ENCODE measurements at regions of chr16 and their contacts with region 1.

Region 1: GRCh38 chr16:78122774-78123315 is 23.4 kb downstream of the WWOX start:
- DNase-seq: peak; percentile 75
- ATAC-seq: peak; percentile 86
- H3K4me3 ChIP-seq: peak overlapping the region in 1 of 3 experiments; percentile 25; a peak in 2 of 6 replicates
- H3K27ac ChIP-seq: peak overlapping the region; percentile 33
- H3K4me1 ChIP-seq: peaks cover 37% of the 10 kb centered on the region
- H3K27me3 ChIP-seq: no peaks in the 10 kb centered on the region
- CTCF ChIP-seq: peak; percentile 61
- EP300 ChIP-seq: no peak
- POLR2A ChIP-seq: no peak
- RAD21 ChIP-seq: peak; percentile 70

Region 2: GRCh38 chr16:78184238-78185183 is 61.7 kb after region 1 on chr16:
- CTCF ChIA-PET with region 1: no interaction called
- POLR2A ChIA-PET with region 1: no interaction called
- in situ Hi-C with region 1: no loop called
- intact Hi-C with region 1: loop called (anchors 10 kb)
- DNase-seq: peak; percentile 68
- ATAC-seq: peak; percentile 67
- H3K4me3 ChIP-seq: no peak overlapping the region
- H3K27ac ChIP-seq: no peak overlapping the region
- H3K4me1 ChIP-seq: peaks cover 34% of the 10 kb centered on the region
- H3K27me3 ChIP-seq: no peaks in the 10 kb centered on the region
- CTCF ChIP-seq: no peak
- EP300 ChIP-seq: peak in 1 of 2 experiments; percentile 26; a peak in 1 of 4 replicates
- POLR2A ChIP-seq: no peak
- RAD21 ChIP-seq: no peak

Region 3: DNA sequence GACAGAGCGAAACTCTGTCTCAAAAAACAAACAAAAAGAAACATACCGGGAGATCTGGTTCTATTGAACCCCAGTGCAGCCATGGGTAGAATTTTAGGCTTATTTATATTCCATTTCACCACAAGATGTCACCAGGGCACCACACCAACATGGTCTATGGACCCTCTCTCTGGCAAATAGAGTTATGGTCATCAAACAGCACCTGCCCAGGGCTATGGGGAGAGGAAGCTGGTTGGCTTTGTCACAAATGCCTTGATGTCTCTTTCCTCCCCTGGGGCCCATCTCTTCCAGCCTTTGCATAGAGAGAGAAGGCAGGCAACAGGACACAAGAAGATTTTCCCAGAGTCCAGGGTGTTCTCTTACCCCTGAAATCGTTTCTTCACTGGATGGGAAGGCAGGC is 105.0 kb after region 1 on chr16:
- CTCF ChIA-PET with region 1: interaction called, 3 read pairs
- POLR2A ChIA-PET with region 1: no interaction called
- in situ Hi-C with region 1: loop called (anchors 5 kb)
- intact Hi-C with region 1: loop called (anchors 2 kb)
- DNase-seq: peak; percentile 74
- ATAC-seq: peak; percentile 98
- H3K4me3 ChIP-seq: no peak overlapping the region
- H3K27ac ChIP-seq: no peak overlapping the region
- H3K4me1 ChIP-seq: peaks cover 30% of the 10 kb centered on the region
- H3K27me3 ChIP-seq: no peaks in the 10 kb centered on the region
- CTCF ChIP-seq: peak; percentile 87
- EP300 ChIP-seq: no peak
- POLR2A ChIP-seq: no peak
- RAD21 ChIP-seq: peak; percentile 86

Region 4: DNA sequence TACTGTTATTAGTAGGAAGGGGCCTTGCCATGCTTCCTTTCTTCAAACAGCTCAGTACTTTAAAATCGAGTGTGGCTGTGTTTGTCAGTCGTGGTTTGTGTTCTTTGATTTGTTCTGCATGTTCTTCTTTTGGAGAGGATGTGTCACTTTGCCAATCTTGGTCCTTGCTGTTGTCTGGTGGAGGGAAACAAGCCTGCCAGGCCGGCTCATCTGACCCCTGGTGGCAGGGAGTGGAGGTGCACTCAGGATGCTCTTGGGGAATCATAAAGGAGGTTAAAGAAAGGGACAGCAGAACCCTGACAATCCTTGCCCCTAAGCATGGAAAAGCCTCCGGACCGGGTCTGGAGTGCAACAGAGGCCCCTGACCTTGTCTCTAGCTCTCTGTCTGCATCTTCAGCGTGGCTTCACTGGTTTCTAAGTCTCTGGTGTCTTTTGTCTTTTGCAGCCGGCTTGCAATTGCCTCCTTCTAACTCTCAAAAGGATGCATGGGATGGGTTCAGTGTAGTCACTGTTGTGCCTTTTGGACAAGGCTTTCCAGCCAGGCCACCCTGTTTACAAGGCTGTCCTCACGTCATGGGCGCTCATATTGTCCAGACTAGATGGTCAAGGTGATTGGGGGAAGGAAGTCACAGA is 112.4 kb after region 1 on chr16:
- CTCF ChIA-PET with region 1: interaction called, 38 read pairs
- POLR2A ChIA-PET with region 1: no interaction called
- in situ Hi-C with region 1: loop called (anchors 5 kb)
- intact Hi-C with region 1: loop called (anchors 1 kb)
- DNase-seq: peak; percentile 65
- ATAC-seq: peak; percentile 96
- H3K4me3 ChIP-seq: no peak overlapping the region
- H3K27ac ChIP-seq: no peak overlapping the region
- H3K4me1 ChIP-seq: peaks cover 21% of the 10 kb centered on the region
- H3K27me3 ChIP-seq: no peaks in the 10 kb centered on the region
- CTCF ChIP-seq: peak; percentile 93
- EP300 ChIP-seq: no peak
- POLR2A ChIP-seq: no peak
- RAD21 ChIP-seq: peak; percentile 83

Region 5: DNA sequence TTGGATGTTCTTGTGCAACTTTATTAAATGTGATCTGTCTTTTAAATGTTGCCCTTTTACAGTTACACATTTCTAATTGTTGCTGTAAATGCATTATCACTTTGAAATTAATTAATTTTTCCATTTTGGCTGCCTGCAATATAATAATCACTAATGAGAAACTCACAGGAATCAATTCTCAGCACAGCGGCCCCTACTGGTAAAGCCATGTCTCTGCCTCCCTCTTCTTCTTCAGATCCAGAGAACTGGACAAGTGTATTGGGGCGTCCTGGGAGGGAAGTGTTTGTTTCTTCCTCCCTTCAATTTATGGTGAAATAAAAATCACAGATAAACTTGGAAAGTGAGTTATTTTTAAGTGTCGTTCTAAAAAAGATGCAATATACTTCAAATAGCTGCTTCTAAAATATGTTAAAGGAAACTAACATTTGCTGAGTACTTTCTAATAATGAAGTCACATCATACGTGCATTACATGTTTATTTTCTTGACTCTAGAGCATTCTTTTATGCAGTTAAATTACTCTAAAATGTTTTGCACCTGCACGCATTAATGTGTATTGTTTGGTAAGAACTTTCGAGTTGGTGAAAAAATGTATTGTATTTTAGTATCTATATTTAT is 314.6 kb after region 1 on chr16:
- CTCF ChIA-PET with region 1: interaction called, 3 read pairs
- POLR2A ChIA-PET with region 1: no interaction called
- in situ Hi-C with region 1: no loop called
- intact Hi-C with region 1: loop called (anchors 5 kb)
- DNase-seq: peak; percentile 38
- ATAC-seq: peak; percentile 47; the same call in 2 of the 3 replicates
- H3K4me3 ChIP-seq: no peak overlapping the region
- H3K27ac ChIP-seq: no peak overlapping the region
- H3K4me1 ChIP-seq: peaks cover 8% of the 10 kb centered on the region
- H3K27me3 ChIP-seq: no peaks in the 10 kb centered on the region
- CTCF ChIP-seq: peak; percentile 75
- EP300 ChIP-seq: no peak
- POLR2A ChIP-seq: no peak
- RAD21 ChIP-seq: peak; percentile 37; the same call in 1 of the 2 replicates

Region 6: GRCh38 chr16:78483124-78483992 is 360.5 kb after region 1 on chr16:
- CTCF ChIA-PET with region 1: no interaction called
- POLR2A ChIA-PET with region 1: no interaction called
- in situ Hi-C with region 1: loop called (anchors 10 kb)
- intact Hi-C with region 1: no loop called
- DNase-seq: peak; percentile 93
- ATAC-seq: peak; percentile 72
- H3K4me3 ChIP-seq: no peak overlapping the region
- H3K27ac ChIP-seq: peak overlapping the region; percentile 90
- H3K4me1 ChIP-seq: peaks cover 89% of the 10 kb centered on the region
- H3K27me3 ChIP-seq: no peaks in the 10 kb centered on the region
- CTCF ChIP-seq: no peak
- EP300 ChIP-seq: peak; percentile 37 to 92; a peak in 3 of 4 replicates
- POLR2A ChIP-seq: no peak
- RAD21 ChIP-seq: no peak

Region 7: DNA sequence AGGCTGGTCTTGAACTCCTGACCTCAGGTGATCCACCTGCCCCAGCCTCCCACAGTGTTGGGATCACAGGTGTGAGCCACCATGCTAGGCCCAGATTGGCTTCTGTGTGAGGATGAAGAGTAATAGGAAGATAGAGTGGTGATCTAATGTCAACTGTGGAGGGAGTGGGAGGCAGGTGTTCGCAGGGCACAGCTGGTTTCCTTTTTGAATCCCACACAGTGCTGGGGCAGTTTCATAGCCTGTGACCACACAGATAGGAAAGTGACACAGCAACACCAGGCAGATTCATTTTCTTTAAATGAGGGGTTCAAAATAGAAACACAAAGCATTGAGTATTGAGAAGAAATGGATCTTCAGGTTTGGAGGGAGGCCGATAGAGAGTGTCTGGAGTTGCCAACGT is 516.9 kb after region 1 on chr16:
- CTCF ChIA-PET with region 1: no interaction called
- POLR2A ChIA-PET with region 1: no interaction called
- in situ Hi-C with region 1: no loop called
- intact Hi-C with region 1: no loop called
- DNase-seq: no peak
- ATAC-seq: no peak
- H3K4me3 ChIP-seq: no peak overlapping the region
- H3K27ac ChIP-seq: no peak overlapping the region
- H3K4me1 ChIP-seq: 0 out of 2 replicates have a peak, but pooled peaks cover 2% of the 10 kb centered on the region
- H3K27me3 ChIP-seq: no peaks in the 10 kb centered on the region
- CTCF ChIP-seq: no peak
- EP300 ChIP-seq: no peak
- POLR2A ChIP-seq: no peak
- RAD21 ChIP-seq: no peak

Region 8: DNA sequence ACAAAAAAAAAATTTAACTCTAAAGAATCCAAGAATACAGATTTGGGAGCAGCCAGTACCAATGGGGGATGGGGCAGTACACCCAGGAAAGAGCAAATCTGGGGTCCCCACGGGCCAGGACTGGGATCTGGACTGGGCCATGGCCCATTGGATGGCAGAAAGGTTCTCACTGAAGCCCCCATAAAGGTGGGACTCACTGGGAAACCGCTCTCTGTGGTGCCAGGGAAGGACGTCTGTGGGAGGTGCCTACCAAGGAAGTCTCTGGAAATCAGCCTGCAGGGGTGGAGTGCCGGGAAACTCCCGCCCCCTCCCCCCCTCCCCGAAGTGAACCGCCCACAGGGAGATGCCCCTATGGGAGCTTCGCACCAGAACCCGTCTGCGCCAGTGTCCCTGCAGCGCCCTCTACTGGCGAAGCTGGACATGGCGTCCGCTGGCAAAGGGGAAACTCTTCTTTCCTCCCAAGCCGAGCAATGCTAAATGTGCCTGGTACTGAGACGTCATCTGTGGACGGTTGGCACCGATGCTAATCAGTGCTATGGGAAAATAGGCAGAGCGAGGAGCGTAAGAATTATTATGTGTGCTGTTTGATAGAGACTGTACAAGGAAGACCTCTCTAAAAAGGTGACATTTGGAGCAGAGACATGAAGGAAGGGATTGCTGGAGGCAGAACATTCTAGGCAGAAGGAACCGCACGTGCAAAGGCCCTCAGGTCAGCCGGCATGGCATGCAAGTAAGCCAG is 647.7 kb after region 1 on chr16:
- CTCF ChIA-PET with region 1: no interaction called
- POLR2A ChIA-PET with region 1: no interaction called
- in situ Hi-C with region 1: loop called (anchors 25 kb)
- intact Hi-C with region 1: loop called (anchors 5 kb)
- DNase-seq: peak; percentile 67
- ATAC-seq: peak; percentile 94
- H3K4me3 ChIP-seq: peak overlapping the region in 1 of 3 experiments; percentile 40; a peak in 1 of 6 replicates
- H3K27ac ChIP-seq: no peak overlapping the region
- H3K4me1 ChIP-seq: peaks cover 30% of the 10 kb centered on the region
- H3K27me3 ChIP-seq: no peaks in the 10 kb centered on the region
- CTCF ChIP-seq: peak; percentile 96
- EP300 ChIP-seq: no peak
- POLR2A ChIP-seq: no peak
- RAD21 ChIP-seq: peak; percentile 89

Measured in HepG2 (cell line).